ENCODE measurements at regions of chr1 and their contacts with region 1.

Region 1: DNA sequence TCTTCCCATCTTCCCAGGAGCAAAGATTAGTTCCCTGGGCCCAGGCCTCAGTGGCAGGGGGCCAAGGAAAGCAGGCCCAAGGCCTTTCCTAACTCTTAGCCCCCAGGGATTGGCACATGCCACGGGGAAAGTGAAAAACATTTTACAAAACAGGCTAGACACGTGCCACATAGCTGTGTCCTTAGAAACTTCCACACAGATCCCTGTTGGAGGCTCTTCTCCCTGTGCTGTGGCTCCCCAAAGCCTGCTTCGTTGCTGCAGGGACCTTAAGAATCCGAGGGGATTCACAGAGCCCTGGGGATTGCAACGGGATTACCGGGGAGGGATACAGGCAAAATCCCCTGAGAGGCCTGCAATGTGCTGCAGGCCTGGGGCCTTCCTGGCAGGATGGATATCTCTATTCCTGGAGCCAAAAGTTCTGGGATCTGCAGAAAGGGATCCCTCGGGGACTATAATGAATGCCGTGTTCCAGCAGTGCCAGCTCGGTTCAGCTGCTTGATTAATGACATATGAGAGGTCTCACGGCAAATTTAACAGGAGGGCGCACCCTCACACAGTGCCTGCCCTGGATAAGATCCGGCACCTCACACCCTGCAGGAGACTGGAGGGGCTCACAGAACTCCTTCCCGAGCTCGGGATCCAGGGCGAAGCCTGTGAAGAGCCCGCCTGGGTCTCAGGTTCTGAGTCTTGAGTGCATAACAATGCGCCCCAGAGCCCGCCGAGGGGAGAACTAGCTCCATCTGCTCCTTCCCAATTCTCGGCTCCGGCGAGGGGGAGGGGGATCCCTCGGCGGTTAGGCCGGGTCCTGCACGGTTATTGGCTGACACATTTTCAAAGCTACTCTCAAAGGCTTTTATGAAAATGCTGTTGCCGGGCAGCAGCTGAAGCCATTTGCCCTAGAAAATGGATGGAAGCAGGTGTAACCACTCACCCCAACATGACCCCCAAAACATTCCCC is 15.3 kb upstream of the RGS8 start:
- DNase-seq: no peak
- H3K4me3 ChIP-seq: no peak overlapping the region
- H3K27ac ChIP-seq: no peak overlapping the region
- H3K4me1 ChIP-seq: no peaks in the 10 kb centered on the region
- CTCF ChIP-seq: no peak

Region 2: DNA sequence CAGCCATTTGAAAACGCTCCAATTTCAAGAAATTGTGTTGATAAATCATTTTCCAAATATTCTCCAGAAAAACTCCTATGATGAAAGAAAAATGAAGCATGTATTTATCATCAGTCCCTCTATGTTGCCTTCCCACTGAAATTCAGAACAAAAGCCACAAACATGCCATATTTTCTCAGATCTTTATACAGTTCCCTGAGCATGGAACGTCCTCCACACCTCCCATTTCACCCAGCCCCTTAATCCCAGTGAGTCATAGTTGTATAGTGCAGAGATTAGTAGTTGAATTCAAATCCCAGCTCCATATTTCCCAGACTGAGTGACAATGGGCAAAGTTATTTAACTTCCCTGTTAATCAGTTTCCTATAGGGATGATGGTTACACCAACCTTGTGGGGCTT is 69.3 kb after region 1 on chr1:
- CTCF ChIA-PET with region 1: no interaction called
- POLR2A ChIA-PET with region 1: no interaction called
- intact Hi-C with region 1: loop called (anchors 5 kb)
- DNase-seq: no peak
- H3K4me3 ChIP-seq: no peak overlapping the region
- H3K27ac ChIP-seq: no peak overlapping the region
- H3K4me1 ChIP-seq: no peaks in the 10 kb centered on the region
- CTCF ChIP-seq: no peak